Activated CD8-positive, alpha-beta T cell treated with anti-CD3 and anti-CD28 coated beads for 36 hours (primary cell): ENCODE measurements at regions of chr7 and their contacts with region 1.

Region 1: DNA sequence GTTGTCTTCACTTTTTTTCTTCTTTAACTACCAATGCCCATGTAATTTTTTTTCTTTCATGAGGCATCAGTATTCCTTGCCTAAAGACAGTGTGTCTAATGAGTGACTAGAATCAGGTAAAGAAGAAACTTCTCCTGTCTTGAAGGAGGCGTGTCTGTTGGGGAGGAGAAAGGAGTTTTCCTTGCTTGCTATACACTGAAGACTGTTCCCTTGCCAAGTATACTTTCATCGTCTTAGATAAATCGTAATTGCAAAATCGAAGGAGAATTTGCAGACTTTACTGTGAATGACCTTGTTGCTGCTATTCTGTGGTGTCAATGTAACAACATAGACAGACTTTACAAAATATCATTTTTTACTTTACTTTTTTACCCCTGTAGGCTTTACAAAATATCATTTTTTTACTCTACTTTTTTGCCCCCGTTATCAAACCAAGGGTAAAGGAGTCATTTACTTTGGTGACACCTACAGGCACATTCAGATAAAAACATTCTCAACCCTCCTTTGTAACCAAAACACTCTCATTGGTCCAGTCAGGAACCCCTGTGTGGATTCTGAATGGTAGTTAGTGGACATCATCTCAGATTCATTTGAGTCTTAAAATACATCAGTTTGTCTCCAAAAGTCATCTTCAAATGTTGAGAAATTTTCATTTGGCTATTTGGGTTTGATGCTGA is 232.4 kb downstream of the AHR start:
- DNase-seq: no peak
- ATAC-seq: no peak
- H3K4me3 Mint-ChIP-seq: no peak overlapping the region
- H3K27ac Mint-ChIP-seq: no peak overlapping the region
- H3K4me1 Mint-ChIP-seq: no peaks in the 10 kb centered on the region
- H3K27me3 Mint-ChIP-seq: peaks cover 3% of the 10 kb centered on the region
- CTCF ChIP-seq: peak; percentile 42

Region 2: GRCh38 chr7:17304926-17305325 is 226.0 kb before region 1 on chr7:
- CTCF ChIA-PET with region 1: no interaction called
- POLR2A ChIA-PET with region 1: no interaction called
- intact Hi-C with region 1: loop called (anchors 5 kb)
- DNase-seq: peak; percentile 52
- ATAC-seq: peak; percentile 85
- H3K4me3 Mint-ChIP-seq: peak overlapping the region; percentile 26
- H3K27ac Mint-ChIP-seq: peak overlapping the region; percentile 89
- H3K4me1 Mint-ChIP-seq: peaks cover 35% of the 10 kb centered on the region
- H3K27me3 Mint-ChIP-seq: no peaks in the 10 kb centered on the region
- CTCF ChIP-seq: no peak

Region 3: GRCh38 chr7:17546599-17546998 is 15.7 kb after region 1 on chr7:
- CTCF ChIA-PET with region 1: no interaction called
- POLR2A ChIA-PET with region 1: no interaction called
- intact Hi-C with region 1: no loop called
- DNase-seq: no peak
- ATAC-seq: no peak
- H3K4me3 Mint-ChIP-seq: no peak overlapping the region
- H3K27ac Mint-ChIP-seq: no peak overlapping the region
- H3K4me1 Mint-ChIP-seq: no peaks in the 10 kb centered on the region
- H3K27me3 Mint-ChIP-seq: peaks cover 4% of the 10 kb centered on the region
- CTCF ChIP-seq: no peak